GM10248 (cell line): ENCODE measurements at regions of chrX and their contacts with region 1.

Region 1: GRCh38 chrX:41096339-41096955 is 11.2 kb downstream of the USP9X start:
- DNase-seq: no peak
- CTCF ChIP-seq: no peak

Region 2: GRCh38 chrX:40971736-40972135 is 124.7 kb before region 1 on chrX:
- CTCF ChIA-PET with region 1: no interaction called
- POLR2A ChIA-PET with region 1: no interaction called
- DNase-seq: no peak
- CTCF ChIP-seq: no peak

Region 3: DNA sequence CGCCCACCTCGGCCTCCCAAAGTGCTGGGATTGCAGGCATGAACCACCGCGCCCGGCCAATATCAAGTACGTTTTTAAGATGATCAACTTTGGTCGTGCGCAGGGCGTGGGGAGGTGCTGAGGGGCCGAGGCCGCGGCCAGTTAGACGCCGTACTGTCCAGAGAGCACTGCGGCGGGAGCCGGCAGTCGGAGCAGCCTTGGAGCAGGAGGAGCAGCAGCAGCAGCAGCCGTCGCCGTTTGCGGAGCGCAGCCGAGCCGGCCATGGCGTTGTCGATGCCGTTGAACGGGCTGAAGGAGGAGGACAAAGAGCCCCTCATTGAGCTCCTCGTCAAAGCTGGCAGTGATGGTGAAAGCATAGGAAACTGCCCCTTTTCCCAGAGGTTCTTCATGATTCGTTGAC is 19.7 kb before region 1 on chrX:
- CTCF ChIA-PET with region 1: no interaction called
- POLR2A ChIA-PET with region 1: no interaction called
- DNase-seq: no peak
- CTCF ChIP-seq: no peak

Region 4: GRCh38 chrX:41116948-41117347 is 20.5 kb after region 1 on chrX:
- CTCF ChIA-PET with region 1: interaction called, 25 read pairs
- POLR2A ChIA-PET with region 1: interaction called, 4 read pairs
- DNase-seq: peak; percentile 50
- CTCF ChIP-seq: no peak